GM18951 (cell line): ENCODE measurements at regions of chr17 and their contacts with region 1.

Region 1: DNA sequence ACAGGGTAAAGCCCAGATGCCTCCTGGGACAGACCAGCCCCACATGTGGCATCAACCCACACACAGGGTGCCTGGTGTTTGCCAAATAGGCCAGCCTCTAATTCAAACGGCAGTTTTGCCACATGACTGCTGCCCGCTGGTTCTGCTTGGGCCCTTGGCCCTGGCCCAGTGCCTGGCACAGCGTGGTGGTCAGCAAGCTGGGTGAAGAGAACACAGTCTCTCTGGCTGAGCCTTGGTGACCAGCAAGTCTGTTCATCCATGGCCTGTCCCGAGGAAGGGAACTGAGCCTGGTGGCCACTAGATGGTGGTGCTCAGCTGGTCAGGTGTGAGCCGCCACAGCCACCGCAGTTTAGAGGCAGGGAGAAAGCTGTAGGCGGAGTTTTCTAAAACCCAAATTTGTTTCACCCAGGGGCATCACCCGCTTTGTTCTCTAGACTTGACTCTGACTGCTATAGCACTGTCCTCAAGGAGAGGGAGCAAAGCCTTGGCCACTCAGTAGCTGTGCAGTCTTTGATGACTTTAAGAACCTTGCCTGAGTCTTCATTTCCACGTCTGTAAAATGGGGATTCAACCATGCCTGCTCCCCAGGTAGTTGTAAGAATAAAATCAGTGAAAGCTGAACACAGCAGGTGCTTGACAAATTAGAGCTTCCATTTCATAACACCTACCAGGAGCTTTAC is 4.7 kb upstream of the GFAP start:
- POLR2A ChIP-seq: no peak

Region 2: DNA sequence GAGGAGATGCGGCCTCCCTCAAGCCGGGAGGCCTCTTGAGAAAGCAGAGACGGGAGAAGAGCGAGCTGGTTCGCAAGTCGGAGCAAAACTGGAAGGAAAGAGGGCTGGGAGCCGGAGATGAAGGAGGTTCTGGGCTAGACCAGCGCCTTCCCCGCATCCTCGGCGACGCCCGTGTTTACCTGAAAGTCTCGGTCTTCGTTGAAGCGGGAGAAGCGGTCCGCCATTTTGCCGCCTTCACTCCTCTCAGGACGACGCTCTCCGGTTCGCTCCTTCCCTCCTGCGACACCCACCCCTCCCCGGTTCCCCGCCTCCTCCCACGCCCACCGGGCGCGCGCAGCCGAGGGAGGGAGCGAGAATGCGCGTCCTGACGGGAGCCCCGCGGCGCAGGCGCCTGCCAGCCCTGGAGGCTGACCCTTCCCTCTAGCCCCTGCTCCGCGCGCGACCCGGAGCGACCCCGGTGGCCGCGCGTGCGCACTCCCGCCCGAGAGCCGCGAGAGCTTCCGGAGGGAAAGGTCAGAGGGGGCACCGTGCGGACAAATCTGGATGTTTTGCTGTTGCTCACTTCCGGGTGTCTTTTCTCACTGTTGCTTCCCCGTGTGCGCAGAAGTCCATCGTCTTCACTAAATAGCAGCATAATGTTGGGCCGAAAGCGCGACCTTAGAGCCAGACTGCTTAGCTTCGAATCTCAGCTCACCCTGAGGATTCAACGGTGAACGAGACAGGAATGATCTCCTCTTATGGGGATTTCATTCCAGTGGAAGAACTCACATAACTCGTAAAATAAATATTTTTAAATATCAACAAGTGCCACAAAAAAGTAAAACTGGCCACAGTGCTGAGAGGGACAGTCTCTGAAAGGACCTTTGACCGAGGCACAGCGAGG is 416.6 kb before region 1 on chr17 and contains the start of gene GPATCH8:
- in situ Hi-C with region 1: no loop called
- POLR2A ChIP-seq: peak; percentile 74

Region 3: GRCh38 chr17:45018848-45019711 is 99.1 kb after region 1 on chr17:
- in situ Hi-C with region 1: loop called (anchors 10 kb)
- POLR2A ChIP-seq: no peak

Region 4: GRCh38 chr17:45098869-45099616 is 179.0 kb after region 1 on chr17:
- in situ Hi-C with region 1: loop called (anchors 10 kb)
- POLR2A ChIP-seq: no peak